ENCODE measurements at regions of chr15 and their contacts with region 1.

Region 1: GRCh38 chr15:78859971-78860732 is 12.5 kb upstream of the MORF4L1 start:
- DNase-seq: peak; percentile 16 to 73 (median 53)
- ATAC-seq: peak; percentile 66 to 85 (median 70)
- H3K4me3 ChIP-seq: peak overlapping the region in 1 of 2 donors; percentile 37
- H3K4me3 Mint-ChIP-seq: peak overlapping the region; percentile 71 to 84 (median 81)
- H3K27ac ChIP-seq: no peak overlapping the region
- H3K27ac Mint-ChIP-seq: peak overlapping the region; percentile 69 to 75
- H3K4me1 ChIP-seq: peaks cover 0 to 6% of the 10 kb centered on the region in 2 experiments
- H3K4me1 Mint-ChIP-seq: peaks cover 6 to 9% (median 6%) of the 10 kb centered on the region in 3 donors
- H3K27me3 ChIP-seq: no peaks in the 10 kb centered on the region
- H3K27me3 Mint-ChIP-seq: no peaks in the 10 kb centered on the region

Region 2: GRCh38 chr15:78872972-78873792 is 13.0 kb after region 1 on chr15:
- CTCF ChIA-PET with region 1: interaction called, 3 to 14 read pairs
- POLR2A ChIA-PET with region 1: interaction called in 1 of 2 experiments, 8 read pairs
- DNase-seq: peak; percentile 70 to 95 (median 87)
- ATAC-seq: peak; percentile 71 to 75 (median 74)
- H3K4me3 ChIP-seq: peak overlapping the region; percentile 93 to 99
- H3K4me3 Mint-ChIP-seq: peak overlapping the region; percentile 100
- H3K27ac ChIP-seq: peak overlapping the region; percentile 100
- H3K27ac Mint-ChIP-seq: peak overlapping the region; percentile 100
- H3K4me1 ChIP-seq: peaks cover 37% of the 10 kb centered on the region in 2 experiments
- H3K4me1 Mint-ChIP-seq: peaks cover 37 to 46% (median 44%) of the 10 kb centered on the region in 3 donors
- H3K27me3 ChIP-seq: no peaks in the 10 kb centered on the region
- H3K27me3 Mint-ChIP-seq: no peaks in the 10 kb centered on the region

Measured in T-cell (primary cell).